ENCODE measurements at regions of chr13 and their contacts with region 1.

Region 1: GRCh38 chr13:94416454-94417080 is 62.9 kb downstream of the DCT start:
- DNase-seq: peak; percentile 84

Region 2: DNA sequence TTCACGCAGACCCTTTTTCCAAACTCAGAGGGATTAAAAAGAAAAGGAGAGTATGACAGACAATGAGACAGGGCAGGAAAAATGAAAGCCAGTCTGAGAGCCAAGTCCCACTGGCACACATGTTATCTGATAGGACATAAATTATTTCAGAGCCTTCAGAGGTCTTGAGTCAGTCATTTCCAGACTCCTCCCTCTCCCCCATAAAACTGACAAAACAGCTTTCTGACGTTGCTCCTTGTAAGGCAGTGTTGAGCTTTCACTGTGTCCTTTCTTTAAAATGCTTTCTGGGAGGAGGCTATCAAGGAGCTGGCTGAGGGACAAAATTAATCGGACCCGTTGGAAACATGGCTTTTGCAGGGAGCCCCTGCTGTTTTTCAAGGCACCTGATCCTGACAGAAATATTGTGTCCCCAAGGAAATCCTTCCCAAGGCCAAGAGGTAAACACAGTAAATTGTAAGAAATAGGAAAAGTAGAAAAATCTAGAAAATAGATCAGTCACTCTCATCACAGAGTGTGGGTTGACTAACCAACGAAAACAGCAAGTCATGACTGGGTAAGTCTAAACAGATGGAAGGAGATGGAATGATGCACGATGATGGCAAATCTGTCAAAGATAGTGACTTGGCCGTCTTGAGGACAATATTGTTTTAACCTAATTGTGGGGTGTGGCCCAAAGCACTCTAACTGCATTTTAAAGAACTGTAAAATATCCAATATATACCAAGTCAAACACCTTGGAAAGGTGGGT is 26.8 kb before region 1 on chr13:
- CTCF ChIA-PET with region 1: interaction called, 11 read pairs
- POLR2A ChIA-PET with region 1: no interaction called
- DNase-seq: peak; percentile 79

Region 3: DNA sequence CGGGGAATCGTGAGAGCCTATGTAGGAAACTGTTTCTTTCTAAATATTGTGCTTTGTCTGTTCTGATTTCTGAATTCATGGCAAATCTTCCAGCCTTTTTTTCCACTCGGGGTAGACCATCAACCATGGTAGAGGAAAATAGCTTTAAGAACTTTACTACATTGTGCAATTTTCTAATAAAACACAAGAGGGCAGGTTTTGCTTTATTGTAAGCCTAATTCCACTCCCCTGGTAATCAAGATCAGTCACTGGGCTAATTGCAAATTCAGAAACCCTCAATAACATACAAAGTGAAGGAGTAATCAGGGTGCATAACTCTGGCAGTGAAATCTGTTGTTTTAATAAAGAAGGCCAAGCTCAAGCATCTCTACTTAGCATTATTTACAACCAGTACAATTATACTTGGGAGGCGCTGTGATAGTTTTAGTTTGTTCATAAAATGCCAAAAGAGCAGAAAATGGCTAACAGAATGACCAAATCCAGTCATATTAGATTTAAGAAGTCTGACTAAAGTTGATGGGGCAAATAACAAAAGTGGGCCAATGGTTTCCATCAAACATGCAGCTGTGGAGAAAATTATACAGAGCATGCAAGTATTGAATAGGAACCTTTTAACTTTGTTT is 19.1 kb after region 1 on chr13:
- CTCF ChIA-PET with region 1: interaction called, 29 read pairs
- POLR2A ChIA-PET with region 1: no interaction called
- DNase-seq: peak; percentile 80

Region 4: DNA sequence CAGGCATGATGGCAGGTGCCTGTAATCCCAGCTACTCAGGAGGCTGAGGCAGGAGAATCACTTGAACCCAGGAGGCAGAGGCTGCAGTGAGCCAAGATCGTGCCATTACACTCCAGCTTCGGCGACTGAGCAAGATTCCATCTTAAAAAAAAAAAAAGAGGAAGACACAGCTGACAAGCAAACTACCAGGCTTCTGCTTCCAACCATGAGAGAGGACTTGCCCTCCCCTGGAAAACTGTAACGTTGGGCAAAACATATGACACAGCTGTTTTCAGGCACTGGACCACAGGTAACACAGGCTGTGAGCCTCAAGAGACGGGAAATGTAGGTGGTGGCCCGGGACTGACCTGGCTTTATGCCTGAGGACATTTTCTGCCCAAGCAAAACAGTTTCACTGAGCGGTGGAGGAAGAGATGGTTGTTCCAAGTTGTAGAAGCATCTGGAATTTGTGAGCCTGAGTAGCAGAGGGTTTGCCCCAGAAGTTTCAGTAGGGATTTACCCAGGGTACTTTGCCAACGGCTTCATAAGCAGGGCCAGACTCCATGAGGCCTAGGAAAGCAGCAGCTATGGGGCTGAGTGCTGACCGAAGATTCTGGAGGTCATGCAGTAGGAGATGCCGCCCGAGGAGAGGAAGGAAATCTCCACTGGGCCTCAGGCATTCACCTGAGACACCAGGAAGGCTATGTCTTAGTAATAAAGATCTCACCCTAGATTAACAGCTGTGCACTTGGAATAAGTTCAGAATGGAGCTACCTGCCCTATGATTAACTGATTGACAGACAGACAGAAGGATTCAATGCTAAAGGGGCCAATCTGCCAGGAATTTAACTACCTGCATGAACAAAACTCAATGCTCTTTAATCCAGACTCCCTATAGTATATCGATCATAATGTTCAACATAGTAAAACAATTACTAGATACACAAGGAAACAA is 796.7 kb after region 1 on chr13:
- CTCF ChIA-PET with region 1: no interaction called
- POLR2A ChIA-PET with region 1: no interaction called
- DNase-seq: no peak